Activated naive CD4-positive, alpha-beta T cell treated with anti-CD3 and anti-CD28 coated beads for 36 hours (primary cell): ENCODE measurements at regions of chr7 and their contacts with region 1.

Region 1: GRCh38 chr7:24572997-24573625 is at the start of gene PALS2:
- DNase-seq: peak; percentile 76
- H3K4me3 Mint-ChIP-seq: peak within 1 kb of the TSS; percentile 84
- H3K27ac Mint-ChIP-seq: peak within 1 kb of the TSS; percentile 72
- H3K4me1 Mint-ChIP-seq: peaks cover 32% of the 10 kb centered on the region
- H3K27me3 Mint-ChIP-seq: peaks cover 3% of the 10 kb centered on the region
- total RNA-seq, gene PALS2: 21.8 to 22.5 TPM

Region 2: DNA sequence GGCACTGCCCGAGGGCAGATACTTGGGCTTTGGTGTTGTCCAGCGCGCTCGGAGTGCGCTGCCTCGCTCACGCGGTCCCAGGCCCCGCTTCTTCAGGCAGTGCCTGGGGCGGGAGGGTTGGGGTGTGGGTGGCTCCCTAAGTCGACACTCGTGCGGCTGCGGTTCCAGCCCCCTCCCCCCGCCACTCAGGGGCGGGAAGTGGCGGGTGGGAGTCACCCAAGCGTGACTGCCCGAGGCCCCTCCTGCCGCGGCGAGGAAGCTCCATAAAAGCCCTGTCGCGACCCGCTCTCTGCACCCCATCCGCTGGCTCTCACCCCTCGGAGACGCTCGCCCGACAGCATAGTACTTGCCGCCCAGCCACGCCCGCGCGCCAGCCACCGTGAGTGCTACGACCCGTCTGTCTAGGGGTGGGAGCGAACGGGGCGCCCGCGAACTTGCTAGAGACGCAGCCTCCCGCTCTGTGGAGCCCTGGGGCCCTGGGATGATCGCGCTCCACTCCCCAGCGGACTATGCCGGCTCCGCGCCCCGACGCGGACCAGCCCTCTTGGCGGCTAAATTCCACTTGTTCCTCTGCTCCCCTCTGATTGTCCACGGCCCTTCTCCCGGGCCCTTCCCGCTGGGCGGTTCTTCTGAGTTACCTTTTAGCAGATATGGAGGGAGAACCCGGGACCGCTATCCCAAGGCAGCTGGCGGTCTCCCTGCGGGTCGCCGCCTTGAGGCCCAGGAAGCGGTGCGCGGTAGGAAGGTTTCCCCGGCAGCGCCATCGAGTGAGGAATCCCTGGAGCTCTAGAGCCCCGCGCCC is 289.0 kb before region 1 on chr7 and contains the start of gene NPY:
- CTCF ChIA-PET with region 1: no interaction called
- intact Hi-C with region 1: loop called (anchors 5 kb)
- DNase-seq: peak; percentile 14
- H3K4me3 Mint-ChIP-seq: peak within 1 kb of the TSS; percentile 70
- H3K27ac Mint-ChIP-seq: no peak within 1 kb of the TSS
- H3K4me1 Mint-ChIP-seq: peaks cover 18% of the 10 kb centered on the region
- H3K27me3 Mint-ChIP-seq: peaks cover 44% of the 10 kb centered on the region
- total RNA-seq, gene NPY: not detected

Region 3: GRCh38 chr7:24587848-24588247 is 14.7 kb after region 1 on chr7:
- CTCF ChIA-PET with region 1: interaction called, 3 read pairs
- intact Hi-C with region 1: loop called (anchors 1 kb)
- DNase-seq: peak; percentile 64
- H3K4me3 Mint-ChIP-seq: no peak overlapping the region
- H3K27ac Mint-ChIP-seq: no peak overlapping the region
- H3K4me1 Mint-ChIP-seq: peaks cover 34% of the 10 kb centered on the region
- H3K27me3 Mint-ChIP-seq: no peaks in the 10 kb centered on the region

Region 4: GRCh38 chr7:24757353-24758275 is 184.5 kb after region 1 on chr7 and contains the start of gene GSDME:
- CTCF ChIA-PET with region 1: no interaction called
- intact Hi-C with region 1: loop called (anchors 1 kb)
- DNase-seq: no peak
- H3K4me3 Mint-ChIP-seq: peak within 1 kb of the TSS; percentile 85
- H3K27ac Mint-ChIP-seq: peak within 1 kb of the TSS; percentile 88
- H3K4me1 Mint-ChIP-seq: peaks cover 33% of the 10 kb centered on the region
- H3K27me3 Mint-ChIP-seq: peaks cover 39% of the 10 kb centered on the region
- total RNA-seq, gene GSDME: 6.8 to 6.9 TPM

Region 5: DNA sequence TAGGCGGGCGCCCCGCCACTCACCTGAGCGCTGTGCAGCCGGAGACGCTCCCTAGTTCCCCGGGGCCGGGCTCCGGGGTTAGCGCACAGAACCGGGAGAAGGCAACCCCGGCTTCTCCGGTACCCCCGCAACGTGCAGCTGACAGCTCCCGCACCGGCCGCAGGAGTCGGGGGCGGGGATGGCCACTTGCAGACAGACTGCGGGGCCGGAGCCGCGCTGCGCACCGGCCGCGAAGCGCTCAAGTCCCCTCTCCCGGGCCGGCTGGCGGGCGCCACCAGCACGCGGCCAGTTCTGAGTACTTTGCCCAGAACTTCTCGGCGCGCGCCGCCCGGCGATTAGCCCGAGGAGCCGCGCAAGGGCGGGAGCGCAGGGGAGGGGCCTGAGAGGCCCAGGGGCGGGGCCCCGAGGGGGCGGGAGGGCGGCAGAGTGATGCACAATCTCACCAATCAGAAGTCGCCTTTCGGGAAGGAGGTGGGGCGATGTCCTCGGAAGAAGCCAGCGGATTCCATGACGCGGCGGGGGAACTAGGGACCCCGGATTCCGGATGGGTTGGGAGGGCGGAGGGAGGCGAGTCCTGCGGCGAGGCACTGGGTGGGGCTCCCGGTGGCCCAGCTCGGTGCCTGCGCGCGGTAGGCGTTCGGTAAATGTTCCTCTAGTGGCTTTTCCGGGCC is 406.9 kb after region 1 on chr7 and contains the start of gene OSBPL3:
- CTCF ChIA-PET with region 1: no interaction called
- intact Hi-C with region 1: loop called (anchors 2 kb)
- DNase-seq: peak; percentile 95
- H3K4me3 Mint-ChIP-seq: peak within 1 kb of the TSS; percentile 87
- H3K27ac Mint-ChIP-seq: peak within 1 kb of the TSS; percentile 85
- H3K4me1 Mint-ChIP-seq: peaks cover 47% of the 10 kb centered on the region
- H3K27me3 Mint-ChIP-seq: no peaks in the 10 kb centered on the region
- total RNA-seq, gene OSBPL3: 25.1 to 27.9 TPM

Region 6: GRCh38 chr7:25125137-25125946 is 552.2 kb after region 1 on chr7 and contains the start of gene CYCS:
- CTCF ChIA-PET with region 1: no interaction called
- intact Hi-C with region 1: loop called (anchors 1 kb)
- DNase-seq: peak; percentile 100
- H3K4me3 Mint-ChIP-seq: peak within 1 kb of the TSS; percentile 93
- H3K27ac Mint-ChIP-seq: peak within 1 kb of the TSS; percentile 98
- H3K4me1 Mint-ChIP-seq: peaks cover 31% of the 10 kb centered on the region
- H3K27me3 Mint-ChIP-seq: no peaks in the 10 kb centered on the region
- total RNA-seq, gene CYCS: 213 to 224 TPM